Testis (tissue), 5 donors: ENCODE measurements at regions of chr9 and their contacts with region 1.

Region 1: DNA sequence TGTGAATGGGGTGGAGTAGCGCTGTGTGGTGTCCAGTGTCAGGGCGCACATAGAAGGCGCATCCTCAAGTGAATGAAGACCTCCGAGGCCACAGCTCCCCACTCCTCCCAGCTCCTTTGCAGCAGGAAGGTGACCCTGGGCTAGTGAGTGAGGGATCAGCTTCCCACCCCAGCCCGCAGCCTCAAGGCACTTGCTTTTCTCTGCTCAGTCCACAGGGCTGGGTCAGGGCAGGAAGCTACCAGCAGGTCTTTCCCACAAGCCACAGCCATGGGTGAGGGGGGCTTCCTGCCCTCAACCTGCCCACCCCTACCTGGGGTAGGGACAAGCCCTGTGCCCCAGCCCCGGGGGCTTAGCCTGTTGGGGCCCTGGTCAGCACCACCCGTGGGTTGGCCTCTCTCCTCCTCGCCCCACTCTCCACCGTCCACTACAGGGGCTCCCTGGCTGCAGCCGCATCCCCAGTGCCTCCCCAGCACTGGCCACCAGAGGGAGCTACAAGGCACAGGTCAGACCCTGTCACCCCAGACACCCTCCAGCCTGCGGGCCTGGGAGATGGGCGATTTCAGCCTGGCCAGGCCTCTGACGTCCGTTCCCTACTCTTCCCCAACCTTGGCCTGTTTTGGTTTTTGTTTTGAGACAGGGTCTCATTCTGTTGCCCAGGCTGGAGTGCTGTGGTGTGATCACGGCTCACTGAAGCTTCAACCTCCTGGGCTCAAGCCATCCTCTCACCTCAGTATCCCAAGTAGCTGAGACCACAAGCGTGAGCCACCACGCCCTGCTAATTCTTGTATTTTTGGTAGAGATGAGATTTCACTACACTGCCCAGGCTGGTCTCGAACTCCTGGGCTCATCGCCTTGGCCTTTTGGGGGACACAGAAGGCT is 1.3 kb upstream of the ABCA2 start:
- DNase-seq: peak; percentile 83
- H3K4me3 ChIP-seq: peak overlapping the region in 1 of 2 donors; percentile 60
- H3K27ac ChIP-seq: no peak overlapping the region
- H3K4me1 ChIP-seq: peaks cover 28% of the 10 kb centered on the region
- H3K27me3 ChIP-seq: no peaks in the 10 kb centered on the region
- CTCF ChIP-seq: peak; percentile 78 to 87 (median 82)
- POLR2A ChIP-seq: no peak

Region 2: GRCh38 chr9:136787690-136788400 is 241.5 kb before region 1 on chr9:
- intact Hi-C with region 1: loop called (anchors 5 kb)
- DNase-seq: peak; percentile 85
- H3K4me3 ChIP-seq: peak overlapping the region in 1 of 2 donors; percentile 5
- H3K27ac ChIP-seq: peak overlapping the region; percentile 91 to 93
- H3K4me1 ChIP-seq: peaks cover 48% of the 10 kb centered on the region
- H3K27me3 ChIP-seq: no peaks in the 10 kb centered on the region
- CTCF ChIP-seq: peak; percentile 92 to 95 (median 94)
- POLR2A ChIP-seq: no peak

Region 3: DNA sequence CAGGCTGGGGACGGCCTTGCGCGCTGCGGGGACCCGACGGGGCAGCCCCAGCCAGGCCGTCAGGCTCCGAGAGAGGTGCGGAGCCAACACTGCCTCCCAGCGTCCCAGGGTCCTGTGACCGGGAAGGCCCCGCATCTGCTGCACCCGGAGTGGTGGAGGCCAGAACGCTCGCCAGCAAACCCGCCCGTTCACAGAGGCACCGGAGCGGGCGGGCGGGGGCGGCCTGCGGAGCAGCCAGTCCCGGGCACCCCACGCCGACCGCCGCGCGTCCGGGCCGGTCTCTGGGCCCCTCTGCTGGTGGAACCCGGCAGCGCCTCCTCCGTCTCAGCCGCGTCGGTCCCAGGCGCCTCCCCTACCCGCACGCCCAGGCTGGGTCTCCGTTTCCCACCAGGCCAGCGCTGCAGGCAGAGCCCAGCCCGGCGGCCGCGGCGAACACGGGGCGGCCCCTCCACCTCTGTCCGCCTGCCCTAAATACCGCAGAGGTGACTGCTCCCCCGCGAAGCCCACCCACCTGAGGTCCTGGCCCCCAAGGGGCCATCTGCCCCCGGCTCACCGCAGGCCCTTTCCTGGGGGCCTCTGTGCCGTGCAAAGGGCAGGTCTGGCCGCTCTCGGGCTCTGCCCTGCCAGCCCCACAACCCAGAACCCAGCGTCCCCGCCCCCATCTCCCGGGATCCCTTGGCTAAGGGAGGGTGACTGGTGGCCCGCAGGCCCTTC is 377.7 kb after region 1 on chr9:
- intact Hi-C with region 1: no loop called
- DNase-seq: peak; percentile 68
- H3K4me3 ChIP-seq: peak overlapping the region; percentile 34 to 45
- H3K27ac ChIP-seq: peak overlapping the region; percentile 84
- H3K4me1 ChIP-seq: peaks cover 35% of the 10 kb centered on the region
- H3K27me3 ChIP-seq: no peaks in the 10 kb centered on the region
- CTCF ChIP-seq: peak; percentile 72 to 83 (median 77)
- POLR2A ChIP-seq: no peak